ENCODE measurements at regions of chr11 and their contacts with region 1.

Region 1: GRCh38 chr11:9103208-9103898 is 12.0 kb upstream of the SCUBE2 start:
- DNase-seq: no peak
- H3K4me3 ChIP-seq: no peak overlapping the region
- H3K27ac ChIP-seq: no peak overlapping the region
- H3K4me1 ChIP-seq: no peaks in the 10 kb centered on the region
- H3K27me3 ChIP-seq: no peaks in the 10 kb centered on the region
- CTCF ChIP-seq: no peak
- EP300 ChIP-seq: no peak
- RAD21 ChIP-seq: no peak

Region 2: GRCh38 chr11:8878771-8879170 is 224.6 kb before region 1 on chr11:
- CTCF ChIA-PET with region 1: no interaction called
- POLR2A ChIA-PET with region 1: no interaction called
- DNase-seq: no peak
- H3K4me3 ChIP-seq: no peak overlapping the region
- H3K27ac ChIP-seq: no peak overlapping the region
- H3K4me1 ChIP-seq: 0 out of 4 replicates have a peak, but pooled peaks cover 0 to 4% of the 10 kb centered on the region in 2 experiments
- H3K27me3 ChIP-seq: no peaks in the 10 kb centered on the region
- CTCF ChIP-seq: no peak
- EP300 ChIP-seq: no peak
- RAD21 ChIP-seq: no peak

Region 3: GRCh38 chr11:9053316-9054035 is 49.9 kb before region 1 on chr11:
- CTCF ChIA-PET with region 1: no interaction called
- POLR2A ChIA-PET with region 1: no interaction called
- DNase-seq: no peak
- H3K4me3 ChIP-seq: no peak overlapping the region
- H3K27ac ChIP-seq: no peak overlapping the region
- H3K4me1 ChIP-seq: no peaks in the 10 kb centered on the region
- H3K27me3 ChIP-seq: no peaks in the 10 kb centered on the region
- CTCF ChIP-seq: no peak
- EP300 ChIP-seq: no peak
- RAD21 ChIP-seq: no peak

Region 4: GRCh38 chr11:9092853-9093778 is 10.2 kb before region 1 on chr11:
- CTCF ChIA-PET with region 1: interaction called, 11 read pairs
- POLR2A ChIA-PET with region 1: no interaction called
- DNase-seq: peak; percentile 58
- H3K4me3 ChIP-seq: no peak overlapping the region
- H3K27ac ChIP-seq: no peak overlapping the region
- H3K4me1 ChIP-seq: peaks cover 0 to 16% of the 10 kb centered on the region in 2 experiments; a peak in 2 of 4 replicates
- H3K27me3 ChIP-seq: no peaks in the 10 kb centered on the region
- CTCF ChIP-seq: peak; percentile 41
- EP300 ChIP-seq: no peak
- RAD21 ChIP-seq: peak; percentile 42; the same call in 1 of the 2 replicates

Region 5: GRCh38 chr11:9158898-9159391 is 55.6 kb after region 1 on chr11:
- CTCF ChIA-PET with region 1: no interaction called
- POLR2A ChIA-PET with region 1: no interaction called
- DNase-seq: no peak
- H3K4me3 ChIP-seq: no peak overlapping the region
- H3K27ac ChIP-seq: peak overlapping the region; percentile 20 to 70; a peak in 3 of 4 replicates
- H3K4me1 ChIP-seq: peaks cover 3 to 41% of the 10 kb centered on the region in 2 experiments; a peak in 3 of 4 replicates
- H3K27me3 ChIP-seq: no peaks in the 10 kb centered on the region
- CTCF ChIP-seq: no peak
- EP300 ChIP-seq: no peak
- RAD21 ChIP-seq: no peak